ENCODE measurements at regions of chr1 and their contacts with region 1.

Region 1: GRCh38 chr1:192808518-192809306 is at the start of gene RGS2:
- DNase-seq: peak; percentile 96
- H3K4me3 Mint-ChIP-seq: peak within 1 kb of the TSS; percentile 95
- H3K27ac Mint-ChIP-seq: peak within 1 kb of the TSS; percentile 96
- H3K4me1 Mint-ChIP-seq: peaks cover 35% of the 10 kb centered on the region
- H3K27me3 Mint-ChIP-seq: peaks cover 7% of the 10 kb centered on the region
- total RNA-seq, gene RGS2: 5.2 and 6.7 TPM in 2 replicates

Region 2: DNA sequence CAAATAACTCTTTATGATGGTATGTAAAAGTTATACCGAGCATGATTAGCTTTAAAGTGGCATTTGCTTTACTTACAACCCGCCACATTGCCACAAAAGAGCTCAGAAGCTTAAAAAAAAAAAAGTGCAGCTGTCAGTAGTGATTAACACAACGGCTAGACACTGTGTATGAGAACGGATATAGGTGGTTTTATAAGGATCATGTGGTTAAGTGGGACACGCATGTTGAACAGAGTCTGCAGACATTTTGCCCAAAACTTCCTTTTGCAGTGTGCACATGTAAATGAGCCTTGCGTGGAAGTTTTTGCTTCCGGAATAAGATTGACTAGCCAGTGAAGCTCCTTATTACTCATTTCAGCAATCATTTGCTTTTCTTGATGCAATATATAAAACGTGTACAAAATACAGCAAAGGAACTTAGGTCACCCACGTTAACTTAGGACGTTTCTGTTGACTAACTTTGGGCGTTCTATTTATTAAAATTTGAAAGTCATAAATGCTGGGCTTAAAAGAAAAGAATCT is 291.9 kb before region 1 on chr1:
- intact Hi-C with region 1: loop called (anchors 2 kb)
- DNase-seq: peak; percentile 89
- H3K4me3 Mint-ChIP-seq: peak overlapping the region; percentile 81
- H3K27ac Mint-ChIP-seq: peak overlapping the region; percentile 89
- H3K4me1 Mint-ChIP-seq: peaks cover 40% of the 10 kb centered on the region
- H3K27me3 Mint-ChIP-seq: no peaks in the 10 kb centered on the region

Region 3: DNA sequence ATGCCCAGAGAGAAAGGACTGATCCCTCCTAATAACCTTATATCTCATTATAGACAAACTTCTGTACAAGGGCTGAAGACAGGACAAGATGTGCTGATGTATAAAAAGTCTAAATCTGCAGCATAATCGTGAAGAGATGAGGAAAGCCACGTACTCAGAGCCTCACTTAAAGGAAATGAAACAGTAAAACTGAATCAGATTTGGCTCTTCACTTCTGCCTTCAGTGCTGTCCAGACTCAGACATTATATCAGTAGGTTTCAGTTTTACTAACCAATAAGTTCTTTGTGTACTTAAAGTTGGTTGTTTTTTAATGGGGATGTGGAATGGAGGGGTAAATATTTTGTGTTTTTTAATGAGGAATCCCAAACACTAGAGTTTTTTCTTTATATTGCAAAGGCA is 278.5 kb before region 1 on chr1:
- intact Hi-C with region 1: no loop called
- DNase-seq: peak; percentile 62
- H3K4me3 Mint-ChIP-seq: peak overlapping the region; percentile 53
- H3K27ac Mint-ChIP-seq: peak overlapping the region; percentile 42
- H3K4me1 Mint-ChIP-seq: peaks cover 23% of the 10 kb centered on the region
- H3K27me3 Mint-ChIP-seq: peaks cover 2% of the 10 kb centered on the region

Region 4: GRCh38 chr1:192787914-192788585 is 20.7 kb before region 1 on chr1:
- intact Hi-C with region 1: no loop called
- DNase-seq: no peak
- H3K4me3 Mint-ChIP-seq: no peak overlapping the region
- H3K27ac Mint-ChIP-seq: no peak overlapping the region
- H3K4me1 Mint-ChIP-seq: no peaks in the 10 kb centered on the region
- H3K27me3 Mint-ChIP-seq: peaks cover 7% of the 10 kb centered on the region

Region 5: GRCh38 chr1:192936313-192937018 is 127.8 kb after region 1 on chr1:
- intact Hi-C with region 1: loop called (anchors 1 kb)
- DNase-seq: no peak
- H3K4me3 Mint-ChIP-seq: peak overlapping the region; percentile 23
- H3K27ac Mint-ChIP-seq: peak overlapping the region; percentile 62
- H3K4me1 Mint-ChIP-seq: peaks cover 28% of the 10 kb centered on the region
- H3K27me3 Mint-ChIP-seq: no peaks in the 10 kb centered on the region

Region 6: DNA sequence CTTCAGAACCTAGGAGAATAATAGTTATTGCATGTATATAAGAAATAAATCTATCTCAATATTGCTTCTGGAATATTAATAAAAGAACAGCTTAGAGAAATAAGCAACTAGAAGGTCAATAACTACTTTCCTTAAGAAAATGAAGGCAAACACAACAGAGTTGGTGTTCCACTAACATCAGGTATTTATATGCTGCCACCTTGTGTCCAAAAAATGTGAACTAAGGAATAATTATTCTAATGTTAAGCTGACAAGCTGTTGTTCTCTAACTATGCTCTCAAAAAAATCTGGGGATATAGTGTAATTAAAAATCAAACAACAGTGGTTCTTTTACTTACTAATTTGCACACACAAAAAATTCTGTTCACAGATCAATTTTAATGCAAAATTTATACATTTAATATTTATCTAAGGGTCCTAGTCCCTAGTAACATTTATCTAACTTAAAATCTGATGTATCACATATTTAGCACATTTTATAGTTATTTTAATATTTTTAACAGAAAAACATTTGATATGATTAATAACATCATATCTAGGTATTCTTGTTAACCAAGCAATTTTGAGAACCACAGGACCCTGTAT is 210.8 kb after region 1 on chr1:
- intact Hi-C with region 1: loop called (anchors 1 kb)
- DNase-seq: peak; percentile 69
- H3K4me3 Mint-ChIP-seq: no peak overlapping the region
- H3K27ac Mint-ChIP-seq: no peak overlapping the region
- H3K4me1 Mint-ChIP-seq: no peaks in the 10 kb centered on the region
- H3K27me3 Mint-ChIP-seq: no peaks in the 10 kb centered on the region

Region 7: GRCh38 chr1:193104906-193105820 is 296.5 kb after region 1 on chr1 and contains the start of gene GLRX2:
- intact Hi-C with region 1: loop called (anchors 5 kb)
- DNase-seq: peak; percentile 87
- H3K4me3 Mint-ChIP-seq: peak within 1 kb of the TSS; percentile 94
- H3K27ac Mint-ChIP-seq: peak within 1 kb of the TSS; percentile 79
- H3K4me1 Mint-ChIP-seq: peaks cover 20% of the 10 kb centered on the region
- H3K27me3 Mint-ChIP-seq: peaks cover 7% of the 10 kb centered on the region
- total RNA-seq, gene GLRX2: 29.4 and 32.6 TPM in 2 replicates

Region 8: GRCh38 chr1:193417945-193418744 is 609.4 kb after region 1 on chr1:
- intact Hi-C with region 1: loop called (anchors 5 kb)
- DNase-seq: peak; percentile 73
- H3K4me3 Mint-ChIP-seq: peak overlapping the region; percentile 76
- H3K27ac Mint-ChIP-seq: peak overlapping the region; percentile 67
- H3K4me1 Mint-ChIP-seq: peaks cover 38% of the 10 kb centered on the region
- H3K27me3 Mint-ChIP-seq: no peaks in the 10 kb centered on the region

Measured in activated CD4-positive, alpha-beta T cell treated with anti-CD3 and anti-CD28 coated beads, Interleukin-2, amount 10 ng/mL, durations not matched to agents 24 days and 14 days (primary cell).